ENCODE measurements at regions of chr17 and their contacts with region 1.

Region 1: GRCh38 chr17:75684924-75685323 is 17.8 kb downstream of the SAP30BP start:
- DNase-seq: peak; percentile 97
- H3K4me3 ChIP-seq: peak overlapping the region in 1 of 3 experiments; percentile 4
- H3K27ac ChIP-seq: peak overlapping the region; percentile 99
- H3K4me1 ChIP-seq: peaks cover 85% of the 10 kb centered on the region
- H3K27me3 ChIP-seq: no peaks in the 10 kb centered on the region
- CTCF ChIP-seq: no peak

Region 2: DNA sequence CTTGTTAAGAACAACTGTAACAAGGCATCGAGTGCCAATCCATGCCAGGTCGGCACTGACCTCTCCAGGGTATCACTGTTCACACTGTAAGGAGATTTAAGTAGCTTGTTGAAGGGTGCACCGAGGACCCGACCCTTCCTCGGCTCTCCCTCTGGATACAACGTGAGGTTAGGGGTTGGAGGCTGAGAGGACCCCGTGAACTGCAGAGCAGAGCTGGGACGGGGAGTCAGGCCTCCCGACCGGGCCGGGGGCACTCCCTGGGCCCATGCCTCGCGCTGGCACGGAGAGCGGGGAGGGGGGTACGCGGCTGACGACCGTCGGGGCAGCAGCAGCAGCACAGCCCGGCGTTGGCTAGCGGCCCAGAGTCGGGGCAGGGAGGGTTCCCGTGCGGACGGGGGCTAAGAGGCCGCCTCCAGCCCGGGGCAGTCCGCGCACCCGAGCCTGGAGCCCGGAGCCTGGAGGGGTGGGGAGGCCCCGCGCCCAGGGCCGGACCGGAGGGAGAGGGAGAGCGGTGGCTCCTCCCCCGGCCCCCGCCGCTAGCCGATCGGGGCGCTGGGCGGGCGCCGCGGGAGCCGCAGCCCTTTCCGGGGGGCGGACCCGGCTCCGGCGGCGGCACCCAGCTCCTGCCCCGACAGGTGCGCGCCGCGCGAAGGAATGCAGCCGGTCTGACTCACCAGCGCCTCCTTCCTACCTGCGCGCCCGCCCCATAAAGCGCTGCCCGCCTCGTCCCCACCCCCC is 36.0 kb after region 1 on chr17 and contains the start of gene ITGB4:
- CTCF ChIA-PET with region 1: interaction called, 4 read pairs
- dilution Hi-C with region 1: loop called (anchors 5 kb)
- in situ Hi-C with region 1: no loop called
- intact Hi-C with region 1: loop called (anchors 2 kb)
- DNase-seq: peak; percentile 92
- H3K4me3 ChIP-seq: peak within 1 kb of the TSS; percentile 72 to 98 (median 95)
- H3K27ac ChIP-seq: peak within 1 kb of the TSS; percentile 82
- H3K4me1 ChIP-seq: peaks cover 25% of the 10 kb centered on the region
- H3K27me3 ChIP-seq: no peaks in the 10 kb centered on the region
- CTCF ChIP-seq: no peak
- total RNA-seq, gene ITGB4: 2,525 to 2,618 TPM

Measured in mammary epithelial cell (primary cell).